ENCODE measurements at regions of chr5 and their contacts with region 1.

Region 1: GRCh38 chr5:139787568-139788293 is 7.9 kb upstream of the PSD2 start:
- DNase-seq: peak; percentile 92 to 94 (median 93)
- H3K4me3 ChIP-seq: peak overlapping the region; percentile 63 to 80 (median 70)
- H3K27ac ChIP-seq: no peak overlapping the region
- H3K4me1 ChIP-seq: peaks cover 0 to 2% (median 0%) of the 10 kb centered on the region in 3 donors
- H3K27me3 ChIP-seq: no peaks in the 10 kb centered on the region
- CTCF ChIP-seq: peak; percentile 98

Region 2: GRCh38 chr5:139869042-139869790 is 81.5 kb after region 1 on chr5:
- intact Hi-C with region 1: loop called (anchors 5 kb)
- DNase-seq: peak in 1 of 5 donors; percentile 46
- H3K4me3 ChIP-seq: no peak overlapping the region
- H3K27ac ChIP-seq: peak overlapping the region; percentile 33 to 65
- H3K4me1 ChIP-seq: peaks cover 0 to 3% (median 0%) of the 10 kb centered on the region in 3 donors
- H3K27me3 ChIP-seq: no peaks in the 10 kb centered on the region
- CTCF ChIP-seq: no peak

Region 3: DNA sequence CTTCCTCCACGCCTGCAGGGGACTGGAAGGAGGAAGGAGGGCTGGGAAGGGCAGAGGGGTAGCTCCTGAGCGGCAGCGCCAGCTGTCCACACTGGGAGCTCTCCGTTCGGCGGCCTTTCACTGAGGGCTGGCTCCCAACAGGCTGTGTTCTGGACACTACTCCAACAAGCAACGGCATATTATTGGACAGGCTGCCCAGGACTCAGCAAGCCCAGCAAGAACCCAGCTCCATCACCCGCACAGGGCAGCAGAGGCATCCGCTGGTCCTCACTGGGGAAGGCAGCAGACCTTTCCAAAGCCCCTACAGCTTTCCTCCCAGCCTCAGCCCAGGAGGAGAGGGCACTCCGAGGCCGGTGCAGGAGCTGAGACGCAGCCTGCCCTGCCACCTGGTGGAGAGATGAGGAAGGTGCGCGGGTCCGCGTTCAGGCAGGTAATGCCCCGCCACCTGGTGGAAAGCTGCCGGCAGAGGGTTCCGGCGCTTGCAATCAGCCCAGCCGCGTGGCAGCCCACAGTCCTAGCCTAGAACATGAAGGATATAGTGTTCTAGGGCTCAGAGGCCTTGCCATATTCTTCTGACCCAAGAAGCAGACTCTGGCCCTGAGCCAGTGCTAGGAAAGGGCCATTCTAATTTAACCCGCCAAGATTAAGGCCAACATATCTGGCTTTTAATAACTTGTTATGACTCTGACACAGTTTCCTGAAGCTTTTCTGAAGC is 181.0 kb after region 1 on chr5:
- intact Hi-C with region 1: loop called (anchors 5 kb)
- DNase-seq: peak; percentile 91 to 94 (median 94)
- H3K4me3 ChIP-seq: no peak overlapping the region
- H3K27ac ChIP-seq: no peak overlapping the region
- H3K4me1 ChIP-seq: no peaks in the 10 kb centered on the region
- H3K27me3 ChIP-seq: no peaks in the 10 kb centered on the region
- CTCF ChIP-seq: peak; percentile 100

Measured in kidney (tissue), 22 donors.